Heart right ventricle (tissue), 16 donors: ENCODE measurements at regions of chr12 and their contacts with region 1.

Region 1: GRCh38 chr12:89709157-89709994 is 738 bp upstream of the ATP2B1 start:
- DNase-seq: peak; percentile 99 to 100
- ATAC-seq: peak; percentile 90 to 98 (median 97)
- H3K4me3 ChIP-seq: peak overlapping the region; percentile 76 to 99 (median 88)
- H3K27ac ChIP-seq: peak overlapping the region; percentile 95 to 100 (median 98)
- H3K4me1 ChIP-seq: peaks cover 0 to 28% (median 18%) of the 10 kb centered on the region in 9 donors
- H3K27me3 ChIP-seq: no peaks in the 10 kb centered on the region
- CTCF ChIP-seq: peak in 1 of 9 donors; percentile 15

Region 2: DNA sequence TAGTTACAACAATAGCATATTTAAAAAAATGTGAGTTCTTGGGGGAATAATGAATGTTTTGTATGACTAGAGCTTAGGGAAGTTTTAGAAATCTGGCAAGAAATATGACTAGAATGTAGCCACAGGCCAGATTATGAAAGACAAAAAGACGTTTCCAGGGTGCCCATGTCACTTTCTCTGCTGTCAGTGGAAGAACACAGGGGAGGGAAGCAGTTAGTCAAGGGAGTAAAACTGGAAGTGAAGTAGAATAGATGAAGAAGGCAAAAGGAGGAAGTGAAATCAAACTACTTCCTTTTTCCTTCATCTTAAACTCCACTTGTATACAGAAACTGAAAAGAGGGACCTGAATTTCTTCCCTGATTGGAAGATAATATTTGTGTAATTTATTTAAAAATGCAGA is 80.5 kb after region 1 on chr12:
- intact Hi-C with region 1: no loop called
- DNase-seq: no peak
- ATAC-seq: peak in 6 of 8 donors; percentile 39 to 58 (median 55)
- H3K4me3 ChIP-seq: no peak overlapping the region
- H3K27ac ChIP-seq: peak overlapping the region in 1 of 10 donors; percentile 82
- H3K4me1 ChIP-seq: peaks cover 0 to 23% (median 0%) of the 10 kb centered on the region in 9 donors
- H3K27me3 ChIP-seq: peaks cover 0 to 47% (median 11%) of the 10 kb centered on the region in 7 donors
- CTCF ChIP-seq: no peak

Region 3: GRCh38 chr12:89862511-89863179 is 153.3 kb after region 1 on chr12:
- intact Hi-C with region 1: loop called in 1 of 10 experiments (anchors 10 kb)
- DNase-seq: peak in 1 of 2 donors; percentile 58
- ATAC-seq: peak; percentile 41 to 91 (median 86)
- H3K4me3 ChIP-seq: peak overlapping the region in 2 of 10 donors; percentile 1 to 8
- H3K27ac ChIP-seq: peak overlapping the region in 9 of 10 donors; percentile 6 to 92 (median 65)
- H3K4me1 ChIP-seq: peaks cover 0 to 51% (median 9%) of the 10 kb centered on the region in 9 donors
- H3K27me3 ChIP-seq: peaks cover 0 to 5% (median 0%) of the 10 kb centered on the region in 7 donors
- CTCF ChIP-seq: no peak